ENCODE measurements at regions of chr10 and their contacts with region 1.

Region 1: GRCh38 chr10:92848441-92849233 is at the start of gene EXOC6:
- DNase-seq: peak in 1 of 2 experiments; percentile 80
- H3K4me3 ChIP-seq: peak within 1 kb of the TSS; percentile 62 to 89 (median 69)
- H3K27ac ChIP-seq: no peak within 1 kb of the TSS; the same call in 1 of the 2 replicates
- H3K4me1 ChIP-seq: peaks cover 0 to 2% (median 0%) of the 10 kb centered on the region in 4 experiments; a peak in 2 of 7 replicates
- H3K27me3 ChIP-seq: peaks cover 3 to 28% (median 14%) of the 10 kb centered on the region in 4 experiments
- CTCF ChIP-seq: no peak
- EP300 ChIP-seq: no peak
- POLR2A ChIP-seq: peak in 1 of 2 experiments; percentile 61; a peak in 1 of 3 replicates
- RAD21 ChIP-seq: no peak
- total RNA-seq, gene EXOC6: 3.9 and 4.5 TPM in 2 replicates

Region 2: GRCh38 chr10:92816091-92816531 is 32.5 kb before region 1 on chr10:
- CTCF ChIA-PET with region 1: interaction called, 12 read pairs
- POLR2A ChIA-PET with region 1: no interaction called
- DNase-seq: no peak
- H3K4me3 ChIP-seq: no peak overlapping the region
- H3K27ac ChIP-seq: no peak overlapping the region
- H3K4me1 ChIP-seq: no peaks in the 10 kb centered on the region
- H3K27me3 ChIP-seq: no peaks in the 10 kb centered on the region
- CTCF ChIP-seq: no peak
- EP300 ChIP-seq: no peak
- POLR2A ChIP-seq: no peak
- RAD21 ChIP-seq: no peak

Region 3: DNA sequence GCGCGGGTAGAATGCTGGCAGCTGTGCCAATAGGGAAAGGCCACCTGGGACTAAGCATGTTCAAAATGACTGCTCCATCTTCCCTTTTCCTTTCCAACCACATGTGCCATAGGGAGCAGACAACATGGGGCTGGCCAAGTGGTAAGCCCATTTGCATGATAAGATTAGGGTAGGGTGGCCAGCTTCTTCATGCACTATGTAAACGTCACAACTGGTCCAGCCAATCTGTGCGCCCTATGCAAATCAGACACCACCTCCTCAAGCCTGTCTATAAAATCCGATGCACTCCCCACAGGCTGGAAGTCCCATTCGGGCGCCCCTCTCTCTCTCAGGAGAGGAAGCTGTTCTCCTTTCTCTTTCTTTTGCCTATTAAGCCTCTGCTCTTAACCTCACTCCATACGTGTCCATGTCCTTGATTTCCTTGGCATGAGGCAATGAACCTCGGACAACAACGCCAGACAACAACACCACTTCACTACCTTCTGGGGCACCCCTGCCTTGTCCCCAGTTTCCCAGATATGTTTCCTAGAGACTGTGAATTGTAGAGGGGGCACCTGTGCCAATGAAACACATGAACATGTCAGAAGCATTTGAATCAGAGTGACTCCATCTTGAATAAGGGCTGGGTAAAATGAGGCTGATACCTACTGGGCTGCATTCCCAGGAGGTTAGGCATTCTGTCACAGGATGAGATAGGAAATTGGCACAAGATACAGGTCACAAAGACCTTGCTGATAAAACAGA is 19.4 kb before region 1 on chr10:
- CTCF ChIA-PET with region 1: interaction called, 86 read pairs
- POLR2A ChIA-PET with region 1: no interaction called
- DNase-seq: peak in 1 of 2 experiments; percentile 42
- H3K4me3 ChIP-seq: no peak overlapping the region
- H3K27ac ChIP-seq: no peak overlapping the region
- H3K4me1 ChIP-seq: no peaks in the 10 kb centered on the region
- H3K27me3 ChIP-seq: no peaks in the 10 kb centered on the region
- CTCF ChIP-seq: no peak
- EP300 ChIP-seq: no peak
- POLR2A ChIP-seq: no peak
- RAD21 ChIP-seq: no peak

Region 4: GRCh38 chr10:92867235-92867634 is 18.6 kb after region 1 on chr10:
- CTCF ChIA-PET with region 1: interaction called, 21 read pairs
- POLR2A ChIA-PET with region 1: no interaction called
- DNase-seq: no peak
- H3K4me3 ChIP-seq: no peak overlapping the region
- H3K27ac ChIP-seq: no peak overlapping the region
- H3K4me1 ChIP-seq: no peaks in the 10 kb centered on the region
- H3K27me3 ChIP-seq: no peaks in the 10 kb centered on the region
- CTCF ChIP-seq: no peak
- EP300 ChIP-seq: no peak
- POLR2A ChIP-seq: no peak
- RAD21 ChIP-seq: no peak

Region 5: GRCh38 chr10:92880233-92880861 is 31.7 kb after region 1 on chr10:
- CTCF ChIA-PET with region 1: interaction called, 23 read pairs
- POLR2A ChIA-PET with region 1: interaction called, 4 read pairs
- DNase-seq: no peak
- H3K4me3 ChIP-seq: no peak overlapping the region
- H3K27ac ChIP-seq: no peak overlapping the region
- H3K4me1 ChIP-seq: no peaks in the 10 kb centered on the region
- H3K27me3 ChIP-seq: no peaks in the 10 kb centered on the region
- CTCF ChIP-seq: peak in 2 of 3 experiments; percentile 32 to 45; a peak in 2 of 4 replicates
- EP300 ChIP-seq: no peak
- POLR2A ChIP-seq: no peak
- RAD21 ChIP-seq: peak; percentile 73 to 76